ENCODE measurements at regions of chr2 and their contacts with region 1.

Region 1: DNA sequence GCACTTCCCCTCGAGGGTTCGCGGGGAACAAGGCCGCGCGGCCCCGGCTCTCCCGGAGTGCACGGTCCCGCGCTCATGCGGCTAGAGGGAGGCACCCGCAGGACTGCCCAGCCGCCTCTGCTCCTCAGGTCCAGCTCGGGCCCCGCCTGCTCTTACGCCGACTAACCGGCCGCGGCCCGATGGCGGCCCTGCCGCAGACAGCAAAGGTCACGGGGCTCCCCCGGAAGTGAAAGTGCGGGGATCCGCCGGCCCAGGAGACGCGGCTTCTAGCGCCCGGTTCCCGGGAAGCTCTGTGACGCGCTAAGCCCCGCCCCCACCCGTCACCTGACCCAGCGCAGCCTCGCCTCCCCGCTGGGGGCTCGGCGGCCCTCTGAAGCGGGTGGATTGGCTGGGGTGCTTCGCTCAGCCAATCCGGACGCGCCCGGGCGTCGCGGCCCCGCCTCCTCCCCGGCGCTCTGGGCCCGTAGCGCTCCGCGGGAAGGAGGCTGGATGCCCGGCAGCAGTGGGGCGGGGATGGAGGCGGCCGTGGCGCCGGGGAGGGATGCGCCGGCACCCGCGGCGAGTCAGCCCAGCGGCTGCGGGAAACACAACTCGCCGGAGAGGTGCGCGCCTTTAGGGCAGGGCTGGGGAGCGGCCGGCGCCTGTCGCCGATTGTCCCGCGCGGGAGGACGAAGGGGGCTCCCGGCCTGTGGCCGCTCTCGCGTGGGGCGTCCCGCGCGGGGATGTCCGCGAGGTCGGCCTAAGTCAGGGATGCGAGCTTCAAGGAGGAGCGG is at the start of gene SCLY:
- DNase-seq: peak; percentile 99
- H3K4me3 ChIP-seq: peak within 1 kb of the TSS; percentile 64 to 93 (median 86)
- H3K27ac ChIP-seq: peak within 1 kb of the TSS; percentile 90 to 95 (median 92)
- H3K4me1 ChIP-seq: peaks cover 10 to 27% (median 20%) of the 10 kb centered on the region in 4 donors
- H3K27me3 ChIP-seq: no peaks in the 10 kb centered on the region
- CTCF ChIP-seq: peak in 1 of 3 experiments; percentile 3
- EP300 ChIP-seq: no peak
- POLR2A ChIP-seq: peak; percentile 84
- total RNA-seq, gene SCLY: 9.8 to 17.9 (median 13.9) TPM

Region 2: GRCh38 chr2:237704501-237705434 is 356.0 kb before region 1 on chr2:
- intact Hi-C with region 1: no loop called
- DNase-seq: no peak
- H3K4me3 ChIP-seq: no peak overlapping the region
- H3K27ac ChIP-seq: peak overlapping the region; percentile 93 to 100 (median 98)
- H3K4me1 ChIP-seq: peaks cover 93 to 98% (median 96%) of the 10 kb centered on the region in 4 donors
- H3K27me3 ChIP-seq: no peaks in the 10 kb centered on the region
- CTCF ChIP-seq: no peak
- EP300 ChIP-seq: peak; percentile 22
- POLR2A ChIP-seq: no peak

Region 3: DNA sequence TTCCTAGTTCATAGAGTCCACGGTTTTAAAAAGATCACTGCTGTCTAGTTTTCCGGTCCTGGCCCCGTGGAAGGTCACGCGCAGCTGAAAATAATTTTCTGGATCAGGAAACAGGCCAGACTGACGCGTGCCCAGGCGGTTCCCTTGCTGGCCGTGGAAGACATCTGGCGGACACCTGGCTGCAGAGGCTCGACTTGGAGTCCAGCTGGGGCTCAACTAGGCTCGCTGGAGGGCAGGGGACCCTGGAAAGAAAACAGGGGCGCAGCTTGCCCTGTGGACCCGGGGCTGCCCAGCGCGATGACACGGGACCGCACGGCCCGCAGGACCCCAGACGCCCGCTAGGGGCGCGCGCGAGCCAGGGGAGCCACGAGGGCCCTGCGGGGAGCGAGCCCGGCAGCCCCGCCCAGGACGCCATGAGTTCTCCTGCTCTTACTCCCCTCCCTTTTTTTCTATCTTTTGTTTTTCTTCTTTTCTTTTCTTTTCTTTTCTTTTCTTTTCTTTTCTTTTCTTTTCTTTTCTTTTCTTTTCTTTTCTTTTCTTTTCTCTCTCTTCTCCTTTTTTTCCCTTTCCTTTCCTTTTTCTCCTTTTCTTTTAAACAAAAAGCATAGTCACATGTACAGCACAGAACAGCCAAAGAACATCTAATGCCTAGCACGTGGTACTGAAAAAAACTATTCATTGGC is 137.1 kb before region 1 on chr2:
- intact Hi-C with region 1: loop called (anchors 10 kb)
- DNase-seq: peak; percentile 93
- H3K4me3 ChIP-seq: peak overlapping the region; percentile 43 to 55 (median 48)
- H3K27ac ChIP-seq: peak overlapping the region; percentile 73 to 79 (median 78)
- H3K4me1 ChIP-seq: peaks cover 7 to 26% (median 23%) of the 10 kb centered on the region in 4 donors
- H3K27me3 ChIP-seq: no peaks in the 10 kb centered on the region
- CTCF ChIP-seq: peak; percentile 98 to 100 (median 98)
- EP300 ChIP-seq: no peak
- POLR2A ChIP-seq: no peak

Region 4: GRCh38 chr2:237966565-237967462 is 93.9 kb before region 1 on chr2 and contains the start of gene UBE2F:
- intact Hi-C with region 1: loop called (anchors 5 kb)
- DNase-seq: peak; percentile 99
- H3K4me3 ChIP-seq: peak within 1 kb of the TSS; percentile 65 to 85 (median 73)
- H3K27ac ChIP-seq: peak within 1 kb of the TSS; percentile 76 to 84 (median 81)
- H3K4me1 ChIP-seq: peaks cover 30 to 50% (median 43%) of the 10 kb centered on the region in 4 donors
- H3K27me3 ChIP-seq: no peaks in the 10 kb centered on the region
- CTCF ChIP-seq: peak in 1 of 3 experiments; percentile 34
- EP300 ChIP-seq: no peak
- POLR2A ChIP-seq: peak; percentile 86
- total RNA-seq, gene UBE2F: 59.0 to 111 (median 78.5) TPM

Region 5: DNA sequence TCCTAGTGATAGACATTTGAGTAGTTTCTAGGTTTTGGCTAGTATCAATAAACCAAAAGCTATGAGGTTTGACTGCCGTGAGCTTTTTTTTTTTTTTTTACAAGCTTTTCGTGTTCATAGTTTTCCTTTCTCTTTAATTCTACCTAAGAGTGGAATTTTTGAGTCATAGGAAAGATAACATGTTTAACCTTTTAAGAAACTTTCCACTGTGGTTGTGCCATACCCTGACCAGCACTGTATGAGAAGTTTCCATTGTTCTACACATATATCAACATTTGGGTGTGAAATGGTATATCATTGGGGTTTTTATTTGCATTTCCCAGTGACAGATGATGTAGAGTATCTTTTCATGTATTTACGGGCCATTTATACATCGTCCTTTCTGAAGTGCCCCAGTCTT is 62.2 kb before region 1 on chr2:
- intact Hi-C with region 1: no loop called
- DNase-seq: no peak
- H3K4me3 ChIP-seq: no peak overlapping the region
- H3K27ac ChIP-seq: no peak overlapping the region
- H3K4me1 ChIP-seq: peaks cover 0 to 14% (median 11%) of the 10 kb centered on the region in 4 donors
- H3K27me3 ChIP-seq: no peaks in the 10 kb centered on the region
- CTCF ChIP-seq: no peak
- EP300 ChIP-seq: no peak
- POLR2A ChIP-seq: no peak